WTC11 (cell line): ENCODE measurements at regions of chr2 and their contacts with region 1.

Region 1: GRCh38 chr2:179410552-179411356 is 146.1 kb upstream of the SESTD1 start:
- DNase-seq: peak; percentile 45
- ATAC-seq: peak; percentile 94
- H3K4me3 Mint-ChIP-seq: no peak overlapping the region
- H3K27ac Mint-ChIP-seq: no peak overlapping the region
- H3K4me1 Mint-ChIP-seq: no peaks in the 10 kb centered on the region; the same call in none of the 2 replicates
- H3K27me3 Mint-ChIP-seq: no peaks in the 10 kb centered on the region
- CTCF ChIP-seq: peak; percentile 72

Region 2: GRCh38 chr2:179422037-179422643 is 11.4 kb after region 1 on chr2:
- CTCF ChIA-PET with region 1: interaction called, 27 read pairs
- POLR2A ChIA-PET with region 1: no interaction called
- DNase-seq: peak; percentile 80
- ATAC-seq: peak; percentile 96
- H3K4me3 Mint-ChIP-seq: no peak overlapping the region
- H3K27ac Mint-ChIP-seq: no peak overlapping the region
- H3K4me1 Mint-ChIP-seq: no peaks in the 10 kb centered on the region
- H3K27me3 Mint-ChIP-seq: no peaks in the 10 kb centered on the region
- CTCF ChIP-seq: peak; percentile 58

Region 3: DNA sequence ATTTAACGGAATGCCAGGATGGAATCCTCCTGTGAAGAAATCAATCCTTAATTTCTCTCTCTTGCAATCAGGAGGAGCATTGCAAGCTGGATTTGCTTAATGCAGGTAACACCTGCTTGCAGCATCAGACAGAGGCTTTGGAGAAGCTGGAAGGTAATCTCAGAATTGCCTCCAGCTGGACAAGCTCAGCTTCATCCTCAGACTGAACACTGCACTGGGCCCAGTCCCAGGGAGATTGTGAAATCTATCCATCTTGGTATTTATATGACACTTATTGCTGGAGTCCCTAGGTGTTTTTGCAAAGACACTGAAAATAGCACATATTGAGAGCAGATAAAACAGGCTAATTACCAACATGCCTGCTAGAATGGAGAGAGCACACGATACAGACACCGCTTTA is 33.3 kb after region 1 on chr2:
- CTCF ChIA-PET with region 1: interaction called, 15 read pairs
- POLR2A ChIA-PET with region 1: no interaction called
- DNase-seq: no peak
- ATAC-seq: no peak
- H3K4me3 Mint-ChIP-seq: no peak overlapping the region
- H3K27ac Mint-ChIP-seq: peak overlapping the region; percentile 91; the same call in 1 of the 2 replicates
- H3K4me1 Mint-ChIP-seq: peaks cover 64% of the 10 kb centered on the region
- H3K27me3 Mint-ChIP-seq: no peaks in the 10 kb centered on the region
- CTCF ChIP-seq: no peak